HEK293 (cell line): ENCODE measurements at regions of chr9 and their contacts with region 1.

Region 1: GRCh38 chr9:131562032-131562959 is 17.0 kb downstream of the PRRT1B start:
- H3K4me3 ChIP-seq: no peak overlapping the region
- H3K27ac ChIP-seq: no peak overlapping the region
- H3K4me1 ChIP-seq: no peaks in the 10 kb centered on the region
- CTCF ChIP-seq: no peak

Region 2: DNA sequence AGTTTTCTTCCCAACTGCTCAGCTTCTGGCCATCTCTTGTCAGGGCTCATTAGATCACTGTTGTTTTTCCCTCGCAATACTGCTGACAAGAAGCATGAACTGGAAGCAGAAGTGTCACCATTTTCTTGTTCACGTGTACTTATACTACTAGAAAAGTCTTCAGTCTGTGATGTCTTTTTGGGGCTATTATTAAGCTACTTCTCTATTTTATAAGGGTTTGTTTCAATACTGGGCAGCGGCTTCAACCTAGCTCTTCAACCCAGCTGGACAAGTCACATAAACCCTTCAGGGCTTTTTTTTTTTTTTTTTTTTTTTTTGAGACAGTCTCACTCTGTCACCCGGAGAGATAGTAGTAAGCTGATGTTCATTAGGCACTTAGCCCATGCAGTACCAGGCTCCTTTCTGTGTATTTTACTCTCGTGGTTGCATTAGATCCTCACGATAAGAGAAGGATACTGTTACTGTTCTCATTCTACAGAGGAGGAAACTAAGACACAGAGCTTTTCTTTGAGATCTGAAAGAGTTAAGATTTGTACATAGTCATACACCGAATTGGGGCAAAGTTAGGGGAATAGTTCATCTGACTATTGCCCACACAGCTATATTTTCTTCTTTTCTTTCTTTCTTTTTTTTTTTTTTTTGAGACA is 157.1 kb after region 1 on chr9:
- CTCF ChIA-PET with region 1: no interaction called
- POLR2A ChIA-PET with region 1: interaction called, 13 read pairs
- H3K4me3 ChIP-seq: no peak overlapping the region
- H3K27ac ChIP-seq: no peak overlapping the region
- H3K4me1 ChIP-seq: no peaks in the 10 kb centered on the region
- CTCF ChIP-seq: no peak